ENCODE measurements at regions of chr14 and their contacts with region 1.

Region 1: GRCh38 chr14:100417466-100417865 is 94.3 kb downstream of the SLC25A47 start:
- DNase-seq: peak; percentile 58 to 78
- H3K4me3 ChIP-seq: no peak overlapping the region
- H3K27ac ChIP-seq: no peak overlapping the region
- H3K4me1 ChIP-seq: peaks cover 0 to 9% (median 3%) of the 10 kb centered on the region in 4 experiments; a peak in 5 of 7 replicates
- H3K27me3 ChIP-seq: no peaks in the 10 kb centered on the region
- CTCF ChIP-seq: peak; percentile 83 to 98 (median 84)
- EP300 ChIP-seq: no peak
- POLR2A ChIP-seq: no peak
- RAD21 ChIP-seq: peak; percentile 90 to 92

Region 2: GRCh38 chr14:100392356-100392755 is 25.1 kb before region 1 on chr14:
- CTCF ChIA-PET with region 1: interaction called, 119 read pairs
- POLR2A ChIA-PET with region 1: no interaction called
- DNase-seq: no peak
- H3K4me3 ChIP-seq: no peak overlapping the region
- H3K27ac ChIP-seq: no peak overlapping the region
- H3K4me1 ChIP-seq: peaks cover 0 to 5% (median 0%) of the 10 kb centered on the region in 4 experiments; a peak in 1 of 7 replicates
- H3K27me3 ChIP-seq: no peaks in the 10 kb centered on the region
- CTCF ChIP-seq: no peak
- EP300 ChIP-seq: no peak
- POLR2A ChIP-seq: no peak
- RAD21 ChIP-seq: no peak

Region 3: DNA sequence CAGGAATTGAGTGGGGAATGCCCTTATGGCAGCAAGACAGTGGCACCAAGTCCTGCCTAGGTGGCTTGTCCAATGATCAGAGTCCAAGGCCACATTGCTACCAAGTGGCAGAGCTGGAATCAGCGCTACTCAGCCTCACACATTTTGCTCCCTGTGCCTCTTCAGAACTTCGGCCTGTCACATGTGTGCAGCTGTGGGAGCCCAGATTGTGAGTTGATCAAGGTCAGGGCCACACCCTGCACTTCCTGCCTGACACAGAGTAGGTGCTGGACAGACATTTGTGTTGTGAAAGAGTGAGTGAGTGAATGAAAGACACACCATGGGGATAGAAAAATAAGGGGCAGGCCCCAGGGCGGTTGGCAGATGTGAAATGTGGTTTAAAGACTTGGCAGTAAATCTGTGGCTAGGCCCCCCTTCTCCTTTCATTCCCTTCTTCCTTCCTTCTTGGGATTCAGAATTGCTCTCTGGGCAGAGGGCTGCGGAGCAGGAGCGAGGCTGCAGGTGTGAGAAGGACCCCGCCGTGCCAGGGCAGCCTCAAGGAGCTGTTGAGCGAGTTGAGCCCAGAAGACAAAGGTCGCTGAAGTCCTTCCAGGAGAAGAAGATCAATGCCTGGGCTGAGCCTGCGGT is 10.8 kb before region 1 on chr14:
- CTCF ChIA-PET with region 1: interaction called, 13 read pairs
- POLR2A ChIA-PET with region 1: interaction called, 3 read pairs
- DNase-seq: no peak
- H3K4me3 ChIP-seq: no peak overlapping the region
- H3K27ac ChIP-seq: no peak overlapping the region
- H3K4me1 ChIP-seq: peaks cover 7 to 19% (median 14%) of the 10 kb centered on the region in 4 experiments
- H3K27me3 ChIP-seq: no peaks in the 10 kb centered on the region
- CTCF ChIP-seq: no peak
- EP300 ChIP-seq: no peak
- POLR2A ChIP-seq: no peak
- RAD21 ChIP-seq: no peak

Region 4: GRCh38 chr14:100434033-100434601 is 16.7 kb after region 1 on chr14:
- CTCF ChIA-PET with region 1: interaction called, 29 read pairs
- POLR2A ChIA-PET with region 1: interaction called, 5 read pairs
- DNase-seq: no peak
- H3K4me3 ChIP-seq: no peak overlapping the region
- H3K27ac ChIP-seq: no peak overlapping the region
- H3K4me1 ChIP-seq: no peaks in the 10 kb centered on the region
- H3K27me3 ChIP-seq: no peaks in the 10 kb centered on the region
- CTCF ChIP-seq: no peak
- EP300 ChIP-seq: no peak
- POLR2A ChIP-seq: no peak
- RAD21 ChIP-seq: no peak

Region 5: DNA sequence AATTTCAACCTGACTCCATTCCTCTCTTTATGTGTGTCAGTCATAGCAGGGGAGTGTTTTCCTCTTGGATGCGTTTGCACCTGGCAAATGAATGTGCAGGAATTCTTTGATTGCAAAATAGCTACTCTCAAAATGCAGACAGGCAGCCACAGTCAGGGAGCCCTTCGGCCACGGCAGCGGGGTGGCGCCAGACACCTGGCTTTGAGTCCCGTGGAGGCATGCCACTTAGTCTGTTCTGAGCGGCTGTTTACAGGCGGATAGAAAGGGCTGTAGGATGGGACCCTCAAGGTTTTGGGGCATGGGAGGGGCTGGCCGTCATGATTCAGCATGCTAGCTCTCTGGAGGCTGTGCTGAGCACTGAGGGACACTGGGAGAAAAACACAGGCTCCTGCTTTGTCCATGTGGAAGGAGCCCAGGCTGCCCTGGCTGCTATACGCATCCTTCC is 22.7 kb after region 1 on chr14:
- CTCF ChIA-PET with region 1: interaction called, 29 read pairs
- POLR2A ChIA-PET with region 1: no interaction called
- DNase-seq: peak; percentile 31 to 75
- H3K4me3 ChIP-seq: no peak overlapping the region
- H3K27ac ChIP-seq: no peak overlapping the region
- H3K4me1 ChIP-seq: peaks cover 0 to 6% (median 4%) of the 10 kb centered on the region in 4 experiments; a peak in 4 of 7 replicates
- H3K27me3 ChIP-seq: no peaks in the 10 kb centered on the region
- CTCF ChIP-seq: peak; percentile 79 to 84 (median 79)
- EP300 ChIP-seq: no peak
- POLR2A ChIP-seq: no peak
- RAD21 ChIP-seq: peak; percentile 91 to 92

Region 6: DNA sequence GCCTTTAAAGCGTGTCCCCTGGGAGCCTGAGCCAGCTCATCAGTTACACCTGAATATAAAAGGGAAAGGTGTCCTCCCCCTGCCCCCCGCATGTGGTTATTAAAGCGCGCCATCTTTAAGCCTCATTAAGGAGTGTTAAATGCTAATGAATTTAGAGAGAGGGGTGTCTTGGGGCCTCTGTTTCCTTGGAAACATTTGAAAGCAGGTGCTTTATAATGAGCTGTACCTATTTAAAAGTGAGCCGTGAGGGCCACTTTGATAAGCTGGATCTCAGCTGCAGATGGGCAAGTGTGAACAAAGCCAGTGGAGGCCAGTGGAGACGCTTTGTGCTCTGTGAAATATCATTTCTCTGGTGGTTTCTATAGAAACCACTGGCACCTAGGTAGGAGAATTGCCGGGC is 85.8 kb after region 1 on chr14:
- CTCF ChIA-PET with region 1: interaction called, 10 read pairs
- POLR2A ChIA-PET with region 1: no interaction called
- DNase-seq: no peak
- H3K4me3 ChIP-seq: no peak overlapping the region
- H3K27ac ChIP-seq: no peak overlapping the region
- H3K4me1 ChIP-seq: no peaks in the 10 kb centered on the region; a peak in 1 of 7 replicates
- H3K27me3 ChIP-seq: no peaks in the 10 kb centered on the region
- CTCF ChIP-seq: no peak
- EP300 ChIP-seq: no peak
- POLR2A ChIP-seq: no peak
- RAD21 ChIP-seq: no peak

Region 7: DNA sequence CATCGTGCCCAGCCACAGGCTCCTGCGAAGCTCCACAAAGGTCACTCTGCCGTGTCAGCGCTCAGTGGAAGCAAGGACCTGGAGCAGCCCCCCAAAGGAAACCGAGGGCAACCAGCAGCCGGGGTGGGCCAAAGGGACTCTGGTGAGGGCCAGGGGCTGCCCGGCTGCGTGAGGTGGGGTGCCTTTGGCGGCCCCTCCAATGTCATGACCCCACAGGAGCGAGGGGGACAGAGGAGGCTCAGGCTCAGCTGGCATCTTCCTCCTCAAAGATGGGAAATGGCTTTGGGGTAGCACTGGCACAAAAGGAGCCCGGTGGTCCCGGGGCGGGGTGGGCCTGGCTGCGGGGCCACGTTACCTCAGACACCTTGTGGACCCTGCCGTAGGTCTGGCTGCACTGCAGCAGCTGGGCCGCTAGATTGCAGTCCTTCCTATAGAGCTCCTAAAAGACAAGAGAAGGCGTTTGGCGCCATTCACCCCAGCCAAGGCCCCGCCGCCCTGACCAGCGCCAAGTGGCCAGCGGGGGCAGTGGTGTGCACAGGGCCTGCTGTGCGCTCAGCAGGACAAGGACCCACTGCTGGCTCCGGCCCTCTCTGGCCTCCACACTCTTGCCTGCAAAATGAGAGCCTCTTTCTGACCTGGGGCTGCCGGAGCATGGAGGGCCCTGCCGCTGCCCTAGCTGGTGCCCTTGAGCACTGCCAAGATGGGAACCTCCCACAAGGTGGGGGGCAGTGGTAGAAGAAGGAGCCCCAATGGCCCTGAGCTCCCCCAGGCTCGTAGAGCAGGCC is 122.9 kb after region 1 on chr14:
- CTCF ChIA-PET with region 1: interaction called, 13 read pairs
- POLR2A ChIA-PET with region 1: no interaction called
- DNase-seq: peak in 1 of 2 experiments; percentile 17
- H3K4me3 ChIP-seq: no peak overlapping the region
- H3K27ac ChIP-seq: no peak overlapping the region
- H3K4me1 ChIP-seq: peaks cover 1 to 5% (median 3%) of the 10 kb centered on the region in 4 experiments; a peak in 3 of 7 replicates
- H3K27me3 ChIP-seq: no peaks in the 10 kb centered on the region; a peak in 1 of 7 replicates
- CTCF ChIP-seq: peak in 2 of 3 experiments; percentile 73 to 78; a peak in 3 of 4 replicates
- EP300 ChIP-seq: no peak
- POLR2A ChIP-seq: no peak
- RAD21 ChIP-seq: peak; percentile 37 to 47